ENCODE measurements at regions of chr16 and their contacts with region 1.

Region 1: GRCh38 chr16:75464130-75464918 is at the start of gene TMEM170A:
- DNase-seq: peak; percentile 98
- H3K4me3 Mint-ChIP-seq: peak within 1 kb of the TSS; percentile 83
- H3K27ac Mint-ChIP-seq: peak within 1 kb of the TSS; percentile 92
- H3K4me1 Mint-ChIP-seq: peaks cover 42% of the 10 kb centered on the region
- H3K27me3 Mint-ChIP-seq: no peaks in the 10 kb centered on the region
- total RNA-seq, gene TMEM170A: 35.1 to 36.3 TPM

Region 2: DNA sequence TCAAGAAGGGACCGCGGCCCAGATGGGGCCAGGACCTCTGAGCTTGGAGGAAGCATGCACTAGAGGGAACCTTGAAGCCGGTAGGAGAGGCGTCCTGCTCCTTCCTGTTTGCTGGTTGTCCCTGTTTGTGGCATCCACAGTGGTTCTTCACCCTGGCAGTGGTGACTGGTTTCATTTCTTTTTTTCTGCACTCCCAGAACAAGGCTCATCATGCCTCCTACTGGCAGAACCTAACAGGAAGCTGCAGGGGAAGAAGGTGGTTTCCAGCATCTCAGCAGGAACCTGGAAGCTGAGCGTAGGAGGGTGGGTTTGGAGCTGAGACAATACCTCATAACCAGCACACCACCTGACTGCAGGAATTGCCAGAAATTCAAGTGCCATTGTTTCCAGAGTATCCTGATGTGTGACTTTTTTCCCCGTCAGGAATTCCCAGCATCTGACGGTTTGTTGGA is 85.9 kb after region 1 on chr16:
- CTCF ChIA-PET with region 1: interaction called, 10 read pairs
- POLR2A ChIA-PET with region 1: no interaction called
- DNase-seq: peak; percentile 54
- H3K4me3 Mint-ChIP-seq: no peak overlapping the region
- H3K27ac Mint-ChIP-seq: no peak overlapping the region
- H3K4me1 Mint-ChIP-seq: peaks cover 17% of the 10 kb centered on the region
- H3K27me3 Mint-ChIP-seq: peaks cover 12% of the 10 kb centered on the region

Region 3: DNA sequence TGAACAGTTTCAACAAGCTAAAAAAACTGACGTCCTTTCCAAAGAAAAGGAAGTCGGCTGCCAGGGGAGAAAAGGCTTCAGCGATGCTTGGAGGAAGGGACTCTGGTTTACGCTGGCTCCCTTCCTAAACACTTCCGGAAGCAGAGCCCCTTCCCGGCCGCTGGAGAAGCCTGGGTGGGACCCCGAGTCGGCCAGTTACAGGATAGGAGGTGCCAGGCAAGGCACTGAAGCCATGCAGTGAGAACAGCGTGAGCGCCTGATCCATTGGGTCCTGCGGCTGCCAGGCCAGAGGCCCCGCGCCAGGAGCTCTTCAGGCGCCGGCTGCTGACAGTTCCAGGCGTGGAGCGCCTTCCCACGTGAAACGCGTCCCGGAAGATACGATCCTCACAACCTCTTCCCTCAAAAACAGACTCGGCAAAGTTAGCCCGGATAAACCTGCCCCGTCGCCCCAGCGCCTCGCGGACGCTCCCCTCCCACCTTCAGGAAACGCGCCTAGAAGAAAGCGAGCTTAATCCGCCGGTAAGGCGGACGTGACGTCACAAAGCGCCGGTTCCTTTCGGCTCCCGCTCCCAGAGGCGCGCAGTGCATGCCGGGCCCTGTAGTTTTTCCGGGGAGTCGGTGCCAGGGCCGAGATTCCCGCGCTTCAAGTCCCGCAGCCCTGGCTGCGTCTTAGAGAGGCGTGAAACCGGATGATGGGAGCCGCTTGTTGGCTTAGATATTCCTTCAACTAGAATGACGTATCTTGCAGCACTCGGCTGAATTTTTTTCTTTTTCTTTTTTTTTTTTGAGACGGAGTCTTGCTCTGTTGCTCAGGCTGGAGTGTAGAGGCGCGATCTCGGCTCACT is 158.7 kb after region 1 on chr16 and contains the start of gene ADAT1:
- CTCF ChIA-PET with region 1: interaction called, 15 read pairs
- POLR2A ChIA-PET with region 1: no interaction called
- DNase-seq: peak; percentile 98
- H3K4me3 Mint-ChIP-seq: peak within 1 kb of the TSS; percentile 91
- H3K27ac Mint-ChIP-seq: peak within 1 kb of the TSS; percentile 99
- H3K4me1 Mint-ChIP-seq: peaks cover 57% of the 10 kb centered on the region
- H3K27me3 Mint-ChIP-seq: no peaks in the 10 kb centered on the region
- total RNA-seq, gene ADAT1: 60.3 to 66.1 TPM